Activated CD8-positive, alpha-beta T cell treated with anti-CD3 and anti-CD28 coated beads for 36 hours (primary cell): ENCODE measurements at regions of chr15 and their contacts with region 1.

Region 1: DNA sequence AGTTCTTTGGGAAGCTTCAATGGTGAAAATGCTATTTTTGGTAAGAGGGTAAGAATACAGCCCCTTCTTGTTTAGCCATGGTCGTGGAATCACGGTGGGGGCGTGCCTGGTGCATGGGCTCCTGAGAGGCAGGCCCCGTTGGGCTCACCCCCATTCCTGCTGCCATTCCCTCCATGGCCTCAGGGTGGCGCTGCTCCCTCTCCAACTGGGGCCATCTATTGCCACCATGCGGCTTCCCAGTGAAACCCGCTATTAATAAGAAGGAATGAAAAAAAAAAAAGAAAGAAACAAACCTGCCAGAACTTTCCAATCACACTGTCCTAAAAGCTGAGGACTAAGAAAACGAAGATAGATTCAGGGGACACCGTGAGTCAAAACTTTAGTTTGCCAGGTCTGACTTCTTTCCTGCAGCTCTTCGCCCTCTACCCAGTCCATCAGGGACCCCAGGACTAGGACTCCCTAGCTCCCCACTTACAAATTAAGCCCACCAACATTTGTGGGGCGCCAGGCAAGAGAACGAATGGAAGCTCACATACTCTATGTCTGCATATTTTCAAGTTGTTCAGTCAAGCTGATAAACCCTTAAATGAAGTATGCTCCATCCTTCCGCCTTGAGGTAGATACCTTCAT is 30.6 kb upstream of the ABHD2 start:
- DNase-seq: peak; percentile 85
- ATAC-seq: peak; percentile 96
- H3K4me3 Mint-ChIP-seq: no peak overlapping the region
- H3K27ac Mint-ChIP-seq: no peak overlapping the region
- H3K4me1 Mint-ChIP-seq: peaks cover 7% of the 10 kb centered on the region
- H3K27me3 Mint-ChIP-seq: peaks cover 1% of the 10 kb centered on the region
- CTCF ChIP-seq: peak; percentile 98

Region 2: GRCh38 chr15:88904624-88905327 is 152.8 kb before region 1 on chr15:
- CTCF ChIA-PET with region 1: interaction called, 13 read pairs
- POLR2A ChIA-PET with region 1: no interaction called
- intact Hi-C with region 1: no loop called
- DNase-seq: peak; percentile 96
- ATAC-seq: peak; percentile 98
- H3K4me3 Mint-ChIP-seq: no peak overlapping the region
- H3K27ac Mint-ChIP-seq: peak overlapping the region; percentile 69
- H3K4me1 Mint-ChIP-seq: peaks cover 22% of the 10 kb centered on the region
- H3K27me3 Mint-ChIP-seq: no peaks in the 10 kb centered on the region
- CTCF ChIP-seq: peak; percentile 84

Region 3: DNA sequence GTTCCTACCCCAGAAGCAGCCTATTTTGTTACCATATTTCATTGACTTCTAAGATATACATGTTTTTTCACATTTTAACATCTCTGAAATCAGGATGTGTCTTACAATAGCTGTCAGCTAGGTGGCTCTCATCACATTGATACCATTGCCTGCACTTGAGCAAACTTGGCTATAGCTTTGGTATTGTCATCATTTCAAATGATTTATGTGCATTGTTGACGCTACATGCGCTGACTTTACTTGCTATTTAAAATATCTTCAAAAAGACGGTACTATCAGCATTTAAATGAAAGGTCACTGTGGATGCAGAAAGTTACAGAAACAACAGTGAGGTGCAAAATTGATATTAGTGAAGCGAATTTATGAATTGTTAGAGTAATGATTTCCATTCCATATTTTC is 23.3 kb before region 1 on chr15:
- CTCF ChIA-PET with region 1: no interaction called
- POLR2A ChIA-PET with region 1: no interaction called
- intact Hi-C with region 1: no loop called
- DNase-seq: no peak
- ATAC-seq: no peak
- H3K4me3 Mint-ChIP-seq: no peak overlapping the region
- H3K27ac Mint-ChIP-seq: no peak overlapping the region
- H3K4me1 Mint-ChIP-seq: no peaks in the 10 kb centered on the region
- H3K27me3 Mint-ChIP-seq: peaks cover 6% of the 10 kb centered on the region
- CTCF ChIP-seq: no peak

Region 4: GRCh38 chr15:89087830-89088604 is 30.4 kb after region 1 on chr15 and contains the start of gene ABHD2:
- CTCF ChIA-PET with region 1: interaction called, 43 read pairs
- POLR2A ChIA-PET with region 1: no interaction called
- intact Hi-C with region 1: no loop called
- DNase-seq: peak; percentile 99
- ATAC-seq: peak; percentile 98
- H3K4me3 Mint-ChIP-seq: no peak within 1 kb of the TSS
- H3K27ac Mint-ChIP-seq: peak within 1 kb of the TSS; percentile 18
- H3K4me1 Mint-ChIP-seq: peaks cover 36% of the 10 kb centered on the region
- H3K27me3 Mint-ChIP-seq: no peaks in the 10 kb centered on the region
- CTCF ChIP-seq: no peak
- total RNA-seq, gene ABHD2: 36.8 to 38.9 TPM

Region 5: GRCh38 chr15:89129123-89129815 is 71.7 kb after region 1 on chr15:
- CTCF ChIA-PET with region 1: interaction called, 92 read pairs
- POLR2A ChIA-PET with region 1: no interaction called
- intact Hi-C with region 1: loop called (anchors 2 kb)
- DNase-seq: peak; percentile 78
- ATAC-seq: peak; percentile 76
- H3K4me3 Mint-ChIP-seq: no peak overlapping the region
- H3K27ac Mint-ChIP-seq: no peak overlapping the region
- H3K4me1 Mint-ChIP-seq: peaks cover 22% of the 10 kb centered on the region
- H3K27me3 Mint-ChIP-seq: no peaks in the 10 kb centered on the region
- CTCF ChIP-seq: peak; percentile 86

Region 6: DNA sequence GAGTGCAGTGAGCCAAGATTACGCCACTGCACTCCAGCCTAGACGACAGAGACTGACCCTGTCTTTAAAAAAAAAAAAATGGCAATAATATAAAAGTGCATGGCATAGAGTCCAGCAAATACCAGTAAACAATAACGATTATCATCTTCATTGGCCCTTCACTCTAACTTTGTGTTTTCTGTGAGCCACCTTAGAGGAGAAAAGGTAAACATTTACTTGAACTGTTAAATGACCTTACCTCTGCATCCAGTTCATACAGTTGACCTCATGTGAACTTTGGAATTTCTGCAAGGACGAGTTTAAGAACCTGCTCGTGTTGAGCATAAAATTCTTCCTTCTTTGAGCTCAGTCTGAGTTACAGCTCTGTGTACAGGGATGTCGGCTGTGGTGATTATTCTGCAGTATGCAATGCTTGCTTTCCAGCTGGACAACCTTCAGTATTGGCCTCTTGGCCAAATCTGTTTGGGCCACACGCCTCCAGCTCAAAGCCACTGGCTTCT is 107.1 kb after region 1 on chr15:
- CTCF ChIA-PET with region 1: interaction called, 27 read pairs
- POLR2A ChIA-PET with region 1: no interaction called
- intact Hi-C with region 1: no loop called
- DNase-seq: no peak
- ATAC-seq: no peak
- H3K4me3 Mint-ChIP-seq: no peak overlapping the region
- H3K27ac Mint-ChIP-seq: no peak overlapping the region
- H3K4me1 Mint-ChIP-seq: peaks cover 31% of the 10 kb centered on the region
- H3K27me3 Mint-ChIP-seq: no peaks in the 10 kb centered on the region
- CTCF ChIP-seq: no peak

Region 7: DNA sequence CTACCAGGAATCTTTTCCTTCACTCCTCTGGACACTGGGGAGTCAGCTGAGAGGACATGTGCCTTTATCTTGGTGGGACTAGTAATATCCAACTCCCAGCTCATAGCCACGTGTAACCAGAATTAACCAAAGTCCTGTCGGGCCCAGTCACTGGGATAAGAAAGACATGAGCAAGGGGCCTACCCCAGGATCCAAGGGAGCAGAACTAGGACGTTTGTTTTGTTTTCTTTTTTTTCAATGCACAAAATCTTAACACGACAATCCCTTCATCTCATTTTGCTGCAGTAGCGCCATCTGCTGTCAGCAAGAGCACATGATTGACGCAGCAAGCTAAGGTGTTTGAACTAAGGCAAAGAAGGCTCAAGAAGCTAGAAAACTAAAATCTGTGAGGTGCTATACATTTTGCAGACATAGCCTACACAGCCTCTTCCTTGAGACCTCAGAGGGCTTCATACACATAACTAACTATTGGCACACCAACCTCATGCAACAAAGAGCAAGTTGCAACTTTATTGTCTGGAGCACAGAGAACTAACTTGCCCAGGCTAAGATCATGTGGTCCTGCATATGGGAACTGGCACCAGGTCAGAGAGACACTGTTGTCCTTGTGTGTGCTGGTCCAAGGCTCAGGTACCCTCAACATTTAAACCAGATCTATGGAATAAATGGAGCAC is 120.2 kb after region 1 on chr15:
- CTCF ChIA-PET with region 1: interaction called, 262 read pairs
- POLR2A ChIA-PET with region 1: no interaction called
- intact Hi-C with region 1: loop called (anchors 2 kb)
- DNase-seq: peak; percentile 78
- ATAC-seq: peak; percentile 35
- H3K4me3 Mint-ChIP-seq: no peak overlapping the region
- H3K27ac Mint-ChIP-seq: peak overlapping the region; percentile 36
- H3K4me1 Mint-ChIP-seq: peaks cover 35% of the 10 kb centered on the region
- H3K27me3 Mint-ChIP-seq: no peaks in the 10 kb centered on the region
- CTCF ChIP-seq: peak; percentile 83